Mammary epithelial cell (primary cell): ENCODE measurements at regions of chr14 and their contacts with region 1.

Region 1: GRCh38 chr14:55192054-55192621 is 753 bp upstream of the DLGAP5 start:
- DNase-seq: no peak
- H3K4me3 ChIP-seq: peak overlapping the region; percentile 48 to 94 (median 59)
- H3K27ac ChIP-seq: peak overlapping the region; percentile 56
- H3K4me1 ChIP-seq: peaks cover 10% of the 10 kb centered on the region
- H3K27me3 ChIP-seq: no peaks in the 10 kb centered on the region
- CTCF ChIP-seq: no peak

Region 2: GRCh38 chr14:55136885-55137786 is 55.0 kb before region 1 on chr14:
- CTCF ChIA-PET with region 1: no interaction called
- dilution Hi-C with region 1: loop called (anchors 5 kb)
- in situ Hi-C with region 1: no loop called
- intact Hi-C with region 1: no loop called
- DNase-seq: peak; percentile 33
- H3K4me3 ChIP-seq: no peak overlapping the region
- H3K27ac ChIP-seq: peak overlapping the region; percentile 38
- H3K4me1 ChIP-seq: peaks cover 17% of the 10 kb centered on the region
- H3K27me3 ChIP-seq: no peaks in the 10 kb centered on the region
- CTCF ChIP-seq: peak in 1 of 2 donors; percentile 6

Region 3: GRCh38 chr14:55157080-55157479 is 35.1 kb before region 1 on chr14:
- CTCF ChIA-PET with region 1: no interaction called
- dilution Hi-C with region 1: no loop called
- in situ Hi-C with region 1: no loop called
- intact Hi-C with region 1: no loop called
- DNase-seq: no peak
- H3K4me3 ChIP-seq: no peak overlapping the region
- H3K27ac ChIP-seq: no peak overlapping the region
- H3K4me1 ChIP-seq: no peaks in the 10 kb centered on the region
- H3K27me3 ChIP-seq: no peaks in the 10 kb centered on the region
- CTCF ChIP-seq: no peak

Region 4: DNA sequence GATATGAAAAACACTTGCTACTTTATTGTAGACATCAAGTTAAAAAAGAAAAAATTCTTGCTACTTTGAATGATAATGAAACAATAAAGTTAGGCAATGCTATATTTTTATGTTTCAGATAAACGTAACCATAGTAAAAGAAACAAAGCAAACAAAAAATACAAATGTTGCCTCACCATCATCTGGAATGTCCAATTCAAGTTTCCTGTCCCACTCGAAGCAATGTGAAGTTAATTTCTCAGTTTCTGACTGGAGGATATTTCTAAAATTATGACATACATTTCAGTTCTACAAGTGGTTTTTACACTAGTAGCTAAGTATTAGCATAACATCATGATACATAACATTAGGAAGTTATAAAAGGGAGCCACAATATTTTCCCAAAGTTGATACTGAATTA is 21.6 kb before region 1 on chr14:
- CTCF ChIA-PET with region 1: interaction called, 13 read pairs
- dilution Hi-C with region 1: no loop called
- in situ Hi-C with region 1: no loop called
- intact Hi-C with region 1: no loop called
- DNase-seq: no peak
- H3K4me3 ChIP-seq: no peak overlapping the region
- H3K27ac ChIP-seq: no peak overlapping the region
- H3K4me1 ChIP-seq: no peaks in the 10 kb centered on the region
- H3K27me3 ChIP-seq: no peaks in the 10 kb centered on the region
- CTCF ChIP-seq: no peak